ENCODE measurements at regions of chr11 and their contacts with region 1.

Region 1: DNA sequence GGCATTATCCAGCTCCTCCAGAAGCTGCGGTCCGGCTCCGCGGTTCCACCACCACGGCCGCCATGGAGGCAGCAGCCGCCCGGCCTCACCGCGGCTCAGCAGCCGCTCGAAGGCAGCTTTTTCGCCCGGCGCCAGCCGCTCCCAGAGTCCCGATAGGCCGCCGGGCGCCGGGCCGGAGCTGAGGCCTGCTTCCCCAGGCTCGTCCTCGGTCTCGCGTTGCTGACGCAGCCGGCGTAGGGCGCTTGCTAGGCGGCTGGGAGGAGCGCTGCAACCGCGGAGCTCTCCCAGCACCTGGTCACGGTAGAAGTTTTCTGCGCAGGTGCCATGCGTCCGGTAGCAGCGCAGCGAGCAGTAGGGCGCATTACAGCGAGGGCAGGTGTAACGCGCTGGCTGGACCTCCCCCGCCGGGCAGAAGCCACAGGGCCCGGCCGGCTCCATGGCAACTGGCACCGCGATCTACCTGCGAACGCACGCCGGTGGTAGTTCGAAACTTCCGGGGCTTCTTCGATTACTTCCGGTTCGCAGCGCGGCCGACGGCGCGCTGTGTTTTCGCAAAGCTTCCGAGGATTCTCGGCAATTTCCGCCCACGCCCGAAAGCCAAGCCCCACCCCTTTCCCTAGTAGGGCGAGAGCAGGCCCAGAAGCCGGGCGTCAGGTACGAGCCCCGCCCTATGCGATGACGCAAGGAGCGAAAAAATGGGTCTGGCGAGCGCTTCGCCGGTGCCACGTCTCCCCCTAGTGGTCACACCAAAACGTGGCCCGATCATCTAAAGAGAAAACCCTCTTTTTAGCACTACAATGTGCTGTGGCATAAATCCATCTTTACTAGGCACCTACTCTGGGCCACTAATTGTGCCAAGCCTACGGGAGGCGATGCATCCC is at the start of gene ZNHIT2:
- DNase-seq: peak; percentile 94 to 100 (median 100)
- ATAC-seq: peak; percentile 85
- H3K4me3 ChIP-seq: peak within 1 kb of the TSS; percentile 92
- H3K4me3 Mint-ChIP-seq: peak within 1 kb of the TSS; percentile 91 to 95 (median 92)
- H3K27ac ChIP-seq: peak within 1 kb of the TSS; percentile 99
- H3K27ac Mint-ChIP-seq: peak within 1 kb of the TSS; percentile 86 to 100 (median 96)
- H3K4me1 ChIP-seq: peaks cover 28 to 37% of the 10 kb centered on the region in 2 donors
- H3K4me1 Mint-ChIP-seq: peaks cover 20 to 77% (median 53%) of the 10 kb centered on the region in 7 donors
- H3K27me3 ChIP-seq: no peaks in the 10 kb centered on the region
- H3K27me3 Mint-ChIP-seq: no peaks in the 10 kb centered on the region
- total RNA-seq, gene ZNHIT2: 9.9 to 18.2 (median 11.3) TPM

Region 2: GRCh38 chr11:64803163-64803845 is 314.2 kb before region 1 on chr11 and contains the start of gene MAP4K2:
- CTCF ChIA-PET with region 1: no interaction called
- POLR2A ChIA-PET with region 1: no interaction called
- intact Hi-C with region 1: loop called in 1 of 2 experiments (anchors 1 kb)
- DNase-seq: peak; percentile 80 to 96 (median 87)
- ATAC-seq: peak; percentile 98
- H3K4me3 ChIP-seq: peak within 1 kb of the TSS; percentile 91
- H3K4me3 Mint-ChIP-seq: peak within 1 kb of the TSS; percentile 85 to 92 (median 88)
- H3K27ac ChIP-seq: peak within 1 kb of the TSS; percentile 98
- H3K27ac Mint-ChIP-seq: peak within 1 kb of the TSS; percentile 82 to 97 (median 95)
- H3K4me1 ChIP-seq: peaks cover 9 to 23% of the 10 kb centered on the region in 2 donors
- H3K4me1 Mint-ChIP-seq: peaks cover 27 to 43% (median 32%) of the 10 kb centered on the region in 7 donors
- H3K27me3 ChIP-seq: no peaks in the 10 kb centered on the region
- H3K27me3 Mint-ChIP-seq: no peaks in the 10 kb centered on the region
- total RNA-seq, gene MAP4K2: 75.2 to 130 (median 84.3) TPM

Region 3: DNA sequence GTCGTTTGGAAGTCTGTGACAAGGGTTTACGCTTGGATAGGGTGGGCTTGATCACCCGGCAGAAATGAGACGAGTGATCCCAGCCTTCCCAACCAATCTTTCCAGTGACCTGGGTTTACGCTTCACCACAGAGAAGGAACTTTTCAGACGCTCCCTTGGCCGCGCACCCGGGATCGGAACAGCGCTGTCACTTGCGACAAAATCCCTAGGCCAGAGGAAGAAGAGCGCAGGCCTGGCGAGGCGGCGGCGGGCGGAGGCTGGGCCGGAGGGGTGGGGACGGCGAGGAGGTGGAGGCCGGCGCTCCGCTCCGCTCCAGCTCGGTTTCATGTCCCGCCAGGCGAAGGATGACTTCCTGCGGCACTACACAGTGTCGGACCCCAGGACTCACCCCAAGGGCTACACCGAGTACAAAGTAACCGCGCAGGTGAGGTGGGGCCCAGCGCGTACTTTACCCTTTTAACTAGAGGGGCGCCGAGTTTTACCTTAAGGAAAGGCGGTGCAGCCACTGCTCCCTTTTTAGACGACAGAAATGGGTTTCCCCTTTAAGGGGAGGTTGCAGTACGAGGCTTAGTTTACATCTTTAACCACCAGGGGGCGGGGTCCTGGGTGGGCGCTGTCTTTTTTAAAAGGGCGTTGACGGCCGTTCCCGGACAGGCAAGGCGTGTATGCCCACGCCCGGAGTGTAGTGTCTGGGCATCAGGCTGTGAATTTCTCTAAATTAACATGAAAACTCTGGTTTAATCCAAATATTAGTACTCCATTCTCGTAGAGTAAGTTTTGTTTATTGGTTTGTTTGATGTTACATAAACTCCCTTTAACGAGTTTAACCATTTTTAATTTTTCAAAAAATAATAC is 90.0 kb before region 1 on chr11 and contains the start of gene SNX15:
- CTCF ChIA-PET with region 1: interaction called, 3 read pairs
- POLR2A ChIA-PET with region 1: interaction called, 9 read pairs
- intact Hi-C with region 1: loop called (anchors 1 kb)
- DNase-seq: peak; percentile 61 to 95 (median 94)
- ATAC-seq: peak; percentile 97
- H3K4me3 ChIP-seq: peak within 1 kb of the TSS; percentile 41
- H3K4me3 Mint-ChIP-seq: peak within 1 kb of the TSS; percentile 66 to 91 (median 83)
- H3K27ac ChIP-seq: peak within 1 kb of the TSS; percentile 59
- H3K27ac Mint-ChIP-seq: peak within 1 kb of the TSS; percentile 59 to 95 (median 87)
- H3K4me1 ChIP-seq: peaks cover 9 to 14% of the 10 kb centered on the region in 2 donors
- H3K4me1 Mint-ChIP-seq: peaks cover 12 to 24% (median 21%) of the 10 kb centered on the region in 7 donors
- H3K27me3 ChIP-seq: no peaks in the 10 kb centered on the region
- H3K27me3 Mint-ChIP-seq: no peaks in the 10 kb centered on the region
- total RNA-seq, gene SNX15: 13.1 to 29.0 (median 21.7) TPM

Region 4: GRCh38 chr11:65095974-65096806 is 21.3 kb before region 1 on chr11 and contains the start of gene VPS51:
- CTCF ChIA-PET with region 1: interaction called, 4 read pairs
- POLR2A ChIA-PET with region 1: interaction called, 75 read pairs
- intact Hi-C with region 1: loop called (anchors 1 kb)
- DNase-seq: peak; percentile 71 to 92 (median 87)
- ATAC-seq: peak; percentile 93
- H3K4me3 ChIP-seq: peak within 1 kb of the TSS; percentile 92
- H3K4me3 Mint-ChIP-seq: peak within 1 kb of the TSS; percentile 83 to 97 (median 94)
- H3K27ac ChIP-seq: peak within 1 kb of the TSS; percentile 88
- H3K27ac Mint-ChIP-seq: peak within 1 kb of the TSS; percentile 89 to 98 (median 97)
- H3K4me1 ChIP-seq: peaks cover 9 to 15% of the 10 kb centered on the region in 2 donors
- H3K4me1 Mint-ChIP-seq: peaks cover 8 to 28% (median 19%) of the 10 kb centered on the region in 7 donors
- H3K27me3 ChIP-seq: no peaks in the 10 kb centered on the region
- H3K27me3 Mint-ChIP-seq: no peaks in the 10 kb centered on the region
- total RNA-seq, gene VPS51: 159 to 269 (median 256) TPM

Region 5: GRCh38 chr11:65251476-65251875 is 134.0 kb after region 1 on chr11:
- CTCF ChIA-PET with region 1: no interaction called
- POLR2A ChIA-PET with region 1: no interaction called
- intact Hi-C with region 1: no loop called
- DNase-seq: no peak
- ATAC-seq: no peak
- H3K4me3 ChIP-seq: no peak overlapping the region
- H3K4me3 Mint-ChIP-seq: no peak overlapping the region
- H3K27ac ChIP-seq: no peak overlapping the region
- H3K27ac Mint-ChIP-seq: no peak overlapping the region
- H3K4me1 ChIP-seq: no peaks in the 10 kb centered on the region
- H3K4me1 Mint-ChIP-seq: no peaks in the 10 kb centered on the region
- H3K27me3 ChIP-seq: no peaks in the 10 kb centered on the region
- H3K27me3 Mint-ChIP-seq: peaks cover 0 to 8% (median 0%) of the 10 kb centered on the region in 5 donors

Region 6: DNA sequence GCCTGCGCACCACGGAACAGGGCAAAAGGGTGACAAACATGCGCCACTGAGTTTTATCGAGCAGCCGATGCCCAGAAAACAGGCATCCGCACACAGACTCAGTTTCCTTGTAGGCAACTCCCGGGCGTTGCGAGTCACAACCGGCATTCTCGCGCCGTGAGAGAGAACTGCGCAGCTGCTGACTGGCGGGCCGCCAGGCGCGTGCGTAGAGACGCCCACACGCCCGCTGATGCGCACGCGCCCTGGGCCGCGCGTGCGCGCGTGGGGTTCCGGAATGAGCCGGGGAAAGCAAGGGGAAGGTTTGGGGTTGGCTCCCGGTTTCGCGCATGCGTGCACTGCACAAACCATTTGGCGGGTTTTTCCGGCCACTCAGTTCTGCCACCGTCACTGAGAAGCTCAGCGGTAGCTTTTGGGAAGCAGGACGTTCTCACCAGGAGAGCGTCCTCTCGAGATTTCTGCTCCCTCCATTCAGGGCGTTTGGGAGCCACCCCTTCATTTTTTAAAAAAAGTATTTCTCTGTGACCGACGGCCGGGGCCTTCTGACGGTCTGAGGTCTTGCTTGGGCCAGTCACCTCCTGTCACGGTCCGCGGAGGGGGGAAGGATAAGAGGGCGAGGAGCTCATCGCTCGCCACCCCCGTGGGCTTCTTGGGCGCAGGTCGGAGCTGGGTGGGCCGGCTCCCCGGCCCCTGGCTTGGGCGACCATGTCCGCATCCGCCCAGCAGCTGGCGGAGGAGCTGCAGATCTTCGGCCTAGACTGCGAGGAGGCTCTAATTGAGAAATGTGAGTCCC is 144.3 kb after region 1 on chr11 and contains the start of gene POLA2:
- CTCF ChIA-PET with region 1: no interaction called
- POLR2A ChIA-PET with region 1: interaction called, 6 read pairs
- intact Hi-C with region 1: loop called in 1 of 2 experiments (anchors 1 kb)
- DNase-seq: peak; percentile 94 to 99 (median 98)
- ATAC-seq: peak; percentile 96
- H3K4me3 ChIP-seq: peak within 1 kb of the TSS; percentile 88
- H3K4me3 Mint-ChIP-seq: peak within 1 kb of the TSS; percentile 83 to 95 (median 92)
- H3K27ac ChIP-seq: peak within 1 kb of the TSS; percentile 88
- H3K27ac Mint-ChIP-seq: peak within 1 kb of the TSS; percentile 91 to 98 (median 97)
- H3K4me1 ChIP-seq: peaks cover 9 to 18% of the 10 kb centered on the region in 2 donors
- H3K4me1 Mint-ChIP-seq: peaks cover 20 to 62% (median 50%) of the 10 kb centered on the region in 7 donors
- H3K27me3 ChIP-seq: no peaks in the 10 kb centered on the region
- H3K27me3 Mint-ChIP-seq: peaks cover 0 to 2% (median 0%) of the 10 kb centered on the region in 5 donors
- total RNA-seq, gene POLA2: 13.4 to 51.6 (median 27.8) TPM

Measured in naive thymus-derived CD4-positive, alpha-beta T cell (primary cell).